Right cardiac atrium (tissue), 5 donors: ENCODE measurements at regions of chr2 and their contacts with region 1.

Region 1: GRCh38 chr2:155310589-155310988 is 612.1 kb downstream of the KCNJ3 start:
- DNase-seq: no peak
- ATAC-seq: no peak
- H3K4me3 ChIP-seq: no peak overlapping the region
- H3K27ac ChIP-seq: no peak overlapping the region
- H3K4me1 ChIP-seq: no peaks in the 10 kb centered on the region
- H3K27me3 ChIP-seq: no peaks in the 10 kb centered on the region

Region 2: GRCh38 chr2:154402218-154402617 is 908.4 kb before region 1 on chr2:
- intact Hi-C with region 1: loop called in 1 of 4 experiments (anchors 5 kb)
- DNase-seq: no peak
- ATAC-seq: no peak
- H3K4me3 ChIP-seq: no peak overlapping the region
- H3K27ac ChIP-seq: no peak overlapping the region
- H3K4me1 ChIP-seq: no peaks in the 10 kb centered on the region
- H3K27me3 ChIP-seq: no peaks in the 10 kb centered on the region

Region 3: DNA sequence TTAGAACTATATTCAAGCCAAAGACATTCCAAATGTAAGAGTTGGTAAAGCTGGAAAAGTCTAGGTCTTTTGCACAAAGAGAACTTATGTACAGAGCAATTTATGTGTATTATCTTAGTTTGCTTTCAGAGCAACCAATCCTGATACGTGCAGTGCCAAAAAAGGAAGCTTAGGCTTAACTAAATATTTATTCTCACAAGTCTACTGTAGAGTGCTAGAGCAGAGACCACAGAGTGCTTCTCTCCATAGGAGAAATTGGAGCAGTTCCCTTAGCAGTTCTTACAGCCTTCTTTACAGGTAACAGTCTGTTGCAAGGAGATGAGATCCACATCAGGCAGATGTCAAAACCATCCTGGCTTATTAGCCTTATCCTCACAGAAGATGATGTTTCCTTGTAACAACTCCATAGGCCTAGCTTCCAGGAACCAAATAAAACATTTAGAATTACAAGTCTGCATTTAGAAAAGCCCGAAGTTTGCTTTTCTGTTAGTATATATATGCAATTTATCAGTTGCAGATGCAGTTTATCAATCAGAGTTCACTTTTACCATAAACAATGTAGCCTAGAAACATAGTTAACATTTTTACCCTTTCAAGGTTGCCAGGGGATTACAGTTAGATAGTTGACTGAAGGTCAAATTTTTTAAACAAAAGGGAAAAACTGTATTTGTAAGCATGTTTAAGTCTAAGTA is 862.7 kb before region 1 on chr2:
- intact Hi-C with region 1: loop called in 1 of 4 experiments (anchors 10 kb)
- DNase-seq: no peak
- ATAC-seq: no peak
- H3K4me3 ChIP-seq: no peak overlapping the region
- H3K27ac ChIP-seq: no peak overlapping the region
- H3K4me1 ChIP-seq: no peaks in the 10 kb centered on the region
- H3K27me3 ChIP-seq: no peaks in the 10 kb centered on the region

Region 4: DNA sequence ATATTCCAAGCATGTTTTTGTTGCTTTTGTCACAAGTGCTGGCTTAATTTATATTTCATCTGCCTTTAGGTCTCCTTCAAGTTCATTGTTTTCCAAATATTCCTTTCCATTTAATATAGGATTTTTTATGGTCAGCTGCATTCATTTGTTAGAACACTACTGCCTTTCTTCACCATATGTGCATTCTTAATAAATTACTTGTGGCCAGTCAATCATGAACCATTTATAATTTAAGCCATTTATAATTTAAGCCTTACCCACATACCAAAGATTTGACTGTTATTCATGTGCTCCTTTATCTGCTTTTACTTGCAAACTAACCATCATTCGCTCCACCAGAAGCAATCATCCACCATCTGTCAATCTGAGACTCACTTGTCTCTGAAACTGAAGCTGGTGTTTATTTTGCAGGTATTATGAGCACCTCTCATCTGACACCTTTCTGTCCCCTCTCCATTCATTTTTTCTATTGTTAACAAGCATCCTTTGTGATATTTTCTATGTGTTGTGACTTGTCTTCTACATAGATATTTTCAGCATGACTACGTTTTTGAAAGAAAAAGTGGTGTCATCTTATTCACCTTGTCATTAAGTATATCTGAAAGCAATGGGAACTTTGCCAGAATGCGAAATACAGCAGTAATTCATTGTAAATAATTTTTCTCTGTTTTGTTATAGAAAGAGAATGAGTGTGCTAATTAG is 174.7 kb after region 1 on chr2:
- intact Hi-C with region 1: no loop called
- DNase-seq: no peak
- ATAC-seq: no peak
- H3K4me3 ChIP-seq: no peak overlapping the region
- H3K27ac ChIP-seq: no peak overlapping the region
- H3K4me1 ChIP-seq: no peaks in the 10 kb centered on the region
- H3K27me3 ChIP-seq: no peaks in the 10 kb centered on the region